ENCODE measurements at regions of chr14 and their contacts with region 1.

Region 1: GRCh38 chr14:24251880-24252288 is 9.5 kb upstream of the TINF2 start:
- DNase-seq: no peak
- ATAC-seq: no peak
- H3K4me3 ChIP-seq: no peak overlapping the region
- H3K27ac ChIP-seq: no peak overlapping the region
- H3K4me1 ChIP-seq: peaks cover 32% of the 10 kb centered on the region
- H3K27me3 ChIP-seq: no peaks in the 10 kb centered on the region
- CTCF ChIP-seq: no peak
- EP300 ChIP-seq: no peak
- POLR2A ChIP-seq: no peak
- RAD21 ChIP-seq: no peak

Region 2: GRCh38 chr14:24224618-24225071 is 27.2 kb before region 1 on chr14:
- CTCF ChIA-PET with region 1: interaction called, 4 read pairs
- POLR2A ChIA-PET with region 1: interaction called, 11 read pairs
- RAD21 ChIA-PET with region 1: no interaction called
- SMC1A ChIA-PET with region 1: interaction called, 3 read pairs
- in situ Hi-C with region 1: no loop called
- intact Hi-C with region 1: no loop called
- DNase-seq: no peak
- ATAC-seq: no peak
- H3K4me3 ChIP-seq: no peak overlapping the region
- H3K27ac ChIP-seq: no peak overlapping the region
- H3K4me1 ChIP-seq: no peaks in the 10 kb centered on the region
- H3K27me3 ChIP-seq: no peaks in the 10 kb centered on the region
- CTCF ChIP-seq: no peak
- EP300 ChIP-seq: no peak
- POLR2A ChIP-seq: no peak
- RAD21 ChIP-seq: no peak

Region 3: GRCh38 chr14:24271134-24271833 is 19.4 kb after region 1 on chr14 and contains the start of gene RABGGTA:
- CTCF ChIA-PET with region 1: interaction called, 266 read pairs
- POLR2A ChIA-PET with region 1: interaction called, 171 read pairs
- RAD21 ChIA-PET with region 1: interaction called, 59 read pairs
- SMC1A ChIA-PET with region 1: interaction called, 141 read pairs
- in situ Hi-C with region 1: no loop called
- intact Hi-C with region 1: loop called (anchors 1 kb)
- DNase-seq: peak; percentile 80
- ATAC-seq: peak; percentile 89
- H3K4me3 ChIP-seq: peak within 1 kb of the TSS; percentile 88
- H3K27ac ChIP-seq: peak within 1 kb of the TSS; percentile 99
- H3K4me1 ChIP-seq: peaks cover 25% of the 10 kb centered on the region
- H3K27me3 ChIP-seq: no peaks in the 10 kb centered on the region
- CTCF ChIP-seq: peak; percentile 84 to 93 (median 86); a peak in 5 of 6 replicates
- EP300 ChIP-seq: no peak
- POLR2A ChIP-seq: peak; percentile 93
- RAD21 ChIP-seq: 0 out of 2 replicates have a peak, but pooled peaks have one; percentile 25
- polyA plus RNA-seq, gene RABGGTA: 38.2 to 38.6 TPM

Region 4: DNA sequence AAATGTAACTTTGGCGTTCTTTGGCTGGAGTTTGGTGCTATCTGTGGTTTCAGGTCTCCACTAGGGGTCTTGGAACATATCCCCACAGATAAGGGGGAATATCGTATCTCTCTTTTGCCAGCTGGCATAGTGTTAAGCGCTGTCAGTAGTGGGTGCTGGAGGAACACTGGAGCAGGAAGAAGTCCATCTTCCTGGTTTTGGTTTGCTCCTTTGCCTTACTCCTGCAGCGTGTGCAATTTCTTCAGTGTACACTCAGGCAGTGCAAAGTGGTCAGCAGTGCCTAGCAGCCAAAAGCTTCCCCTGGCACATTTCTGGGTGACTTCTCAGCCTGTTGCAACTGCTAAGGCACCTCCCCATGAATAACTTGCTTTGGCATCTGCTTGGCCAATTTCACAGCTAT is 99.6 kb after region 1 on chr14:
- CTCF ChIA-PET with region 1: no interaction called
- POLR2A ChIA-PET with region 1: no interaction called
- RAD21 ChIA-PET with region 1: no interaction called
- SMC1A ChIA-PET with region 1: no interaction called
- in situ Hi-C with region 1: no loop called
- intact Hi-C with region 1: no loop called
- DNase-seq: no peak
- ATAC-seq: no peak; the same call in 2 of the 3 replicates
- H3K4me3 ChIP-seq: no peak overlapping the region
- H3K27ac ChIP-seq: no peak overlapping the region
- H3K4me1 ChIP-seq: no peaks in the 10 kb centered on the region
- H3K27me3 ChIP-seq: peaks cover 1 to 4% of the 10 kb centered on the region in 2 experiments; a peak in 3 of 4 replicates
- CTCF ChIP-seq: no peak
- EP300 ChIP-seq: no peak
- POLR2A ChIP-seq: no peak
- RAD21 ChIP-seq: no peak

Measured in GM12878 (cell line).